ENCODE measurements at regions of chr12 and their contacts with region 1.

Region 1: DNA sequence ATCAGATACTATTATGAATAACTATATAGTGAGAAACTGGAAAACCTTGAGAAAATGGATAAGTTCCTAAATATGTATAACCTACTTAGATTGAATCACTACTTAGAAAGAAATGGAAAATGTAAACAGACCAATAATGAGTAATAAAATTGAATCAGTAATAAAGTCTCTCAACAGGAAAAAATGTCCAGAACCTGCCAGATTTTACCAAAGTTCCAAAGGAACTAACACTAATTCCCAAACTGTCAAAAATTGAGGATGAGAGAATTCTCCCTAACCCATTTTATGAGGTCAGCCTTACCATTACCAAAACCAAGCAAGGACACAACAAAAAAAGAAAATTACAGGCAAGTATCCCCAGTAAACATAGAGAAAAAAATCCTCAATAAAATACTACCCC is 272.0 kb downstream of the RPAP3 start:
- DNase-seq: no peak
- H3K4me3 Mint-ChIP-seq: no peak overlapping the region
- H3K27ac Mint-ChIP-seq: no peak overlapping the region
- H3K4me1 Mint-ChIP-seq: no peaks in the 10 kb centered on the region
- H3K27me3 Mint-ChIP-seq: no peaks in the 10 kb centered on the region
- CTCF ChIP-seq: no peak

Region 2: DNA sequence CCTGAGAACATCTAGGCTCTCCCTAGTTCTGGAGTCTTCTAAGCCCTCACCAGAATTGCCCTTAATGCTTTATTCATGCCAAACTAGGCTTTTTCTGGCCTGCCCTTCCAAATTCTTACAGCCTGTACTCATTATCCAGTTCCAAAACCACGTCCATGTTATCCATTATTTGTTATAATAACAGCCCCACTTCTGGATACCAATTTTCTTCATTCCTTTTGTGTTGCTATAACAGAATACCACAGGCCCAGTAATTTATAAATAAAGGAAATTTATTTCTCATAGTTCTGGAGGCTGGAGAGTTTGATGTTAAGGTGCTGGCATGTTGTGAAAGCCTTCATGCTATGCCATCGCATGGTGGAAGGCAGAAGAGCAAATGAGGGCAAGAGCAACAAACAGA is 286.1 kb before region 1 on chr12:
- CTCF ChIA-PET with region 1: no interaction called
- POLR2A ChIA-PET with region 1: no interaction called
- intact Hi-C with region 1: no loop called
- DNase-seq: no peak
- H3K4me3 Mint-ChIP-seq: no peak overlapping the region
- H3K27ac Mint-ChIP-seq: no peak overlapping the region
- H3K4me1 Mint-ChIP-seq: no peaks in the 10 kb centered on the region
- H3K27me3 Mint-ChIP-seq: no peaks in the 10 kb centered on the region
- CTCF ChIP-seq: no peak

Region 3: GRCh38 chr12:47410383-47410782 is 23.5 kb before region 1 on chr12:
- CTCF ChIA-PET with region 1: no interaction called
- POLR2A ChIA-PET with region 1: no interaction called
- intact Hi-C with region 1: loop called (anchors 1 kb)
- DNase-seq: no peak
- H3K4me3 Mint-ChIP-seq: no peak overlapping the region
- H3K27ac Mint-ChIP-seq: no peak overlapping the region
- H3K4me1 Mint-ChIP-seq: no peaks in the 10 kb centered on the region
- H3K27me3 Mint-ChIP-seq: no peaks in the 10 kb centered on the region
- CTCF ChIP-seq: no peak

Region 4: GRCh38 chr12:48459259-48459658 is 1025.4 kb after region 1 on chr12:
- CTCF ChIA-PET with region 1: no interaction called
- POLR2A ChIA-PET with region 1: no interaction called
- intact Hi-C with region 1: no loop called
- DNase-seq: no peak
- H3K4me3 Mint-ChIP-seq: no peak overlapping the region
- H3K27ac Mint-ChIP-seq: no peak overlapping the region
- H3K4me1 Mint-ChIP-seq: no peaks in the 10 kb centered on the region
- H3K27me3 Mint-ChIP-seq: peaks cover 60% of the 10 kb centered on the region
- CTCF ChIP-seq: no peak

Measured in MCF 10A (cell line).